ENCODE measurements at regions of chr5 and their contacts with region 1.

Region 1: GRCh38 chr5:78353520-78353919 is 6.9 kb upstream of the SCAMP1 start:
- DNase-seq: no peak
- ATAC-seq: no peak
- H3K4me3 ChIP-seq: no peak overlapping the region
- H3K27ac ChIP-seq: no peak overlapping the region
- H3K4me1 ChIP-seq: peaks cover 4% of the 10 kb centered on the region
- H3K27me3 ChIP-seq: no peaks in the 10 kb centered on the region
- CTCF ChIP-seq: no peak
- POLR2A ChIP-seq: no peak

Region 2: DNA sequence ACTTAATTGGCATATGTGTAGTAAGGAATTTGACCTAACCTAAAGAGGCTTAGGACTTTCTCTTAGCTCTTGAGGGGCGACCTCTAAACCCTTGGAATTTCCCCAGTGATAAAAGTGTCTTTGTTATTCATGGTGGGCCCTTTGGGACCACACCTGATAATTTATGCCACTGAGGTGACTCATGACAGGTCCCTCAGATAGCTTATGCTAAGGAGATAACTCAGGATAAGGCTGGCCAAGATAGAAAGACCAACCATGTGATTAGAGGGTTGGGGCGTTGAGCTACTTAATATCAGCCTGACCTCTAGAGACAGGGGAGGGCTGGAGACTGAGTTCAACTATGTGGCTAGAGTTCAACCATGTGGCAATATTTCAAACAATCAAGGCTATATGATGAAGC is 277.2 kb before region 1 on chr5:
- intact Hi-C with region 1: no loop called
- DNase-seq: no peak
- ATAC-seq: no peak
- H3K4me3 ChIP-seq: no peak overlapping the region
- H3K27ac ChIP-seq: no peak overlapping the region
- H3K4me1 ChIP-seq: no peaks in the 10 kb centered on the region
- H3K27me3 ChIP-seq: no peaks in the 10 kb centered on the region
- CTCF ChIP-seq: no peak
- POLR2A ChIP-seq: no peak

Region 3: GRCh38 chr5:78300464-78301045 is 53.0 kb before region 1 on chr5:
- intact Hi-C with region 1: loop called (anchors 5 kb)
- DNase-seq: no peak
- ATAC-seq: no peak
- H3K4me3 ChIP-seq: no peak overlapping the region
- H3K27ac ChIP-seq: no peak overlapping the region
- H3K4me1 ChIP-seq: peaks cover 4% of the 10 kb centered on the region
- H3K27me3 ChIP-seq: no peaks in the 10 kb centered on the region
- CTCF ChIP-seq: peak in 4 of 7 experiments; percentile 14 to 31 (median 23)
- POLR2A ChIP-seq: no peak

Measured in body of pancreas (tissue), 4 donors.